Activated CD4-positive, alpha-beta T cell treated with anti-CD3 and anti-CD28 coated beads for 36 hours (primary cell): ENCODE measurements at regions of chr2 and their contacts with region 1.

Region 1: GRCh38 chr2:157404363-157404762 is 39.5 kb downstream of the CYTIP start:
- DNase-seq: peak; percentile 72
- ATAC-seq: peak; percentile 95
- H3K4me3 Mint-ChIP-seq: peak overlapping the region; percentile 0
- H3K27ac Mint-ChIP-seq: peak overlapping the region; percentile 80
- H3K4me1 Mint-ChIP-seq: peaks cover 75% of the 10 kb centered on the region
- H3K27me3 Mint-ChIP-seq: no peaks in the 10 kb centered on the region

Region 2: GRCh38 chr2:157170299-157170698 is 234.1 kb before region 1 on chr2:
- CTCF ChIA-PET with region 1: no interaction called
- POLR2A ChIA-PET with region 1: no interaction called
- intact Hi-C with region 1: no loop called
- DNase-seq: no peak
- ATAC-seq: no peak
- H3K4me3 Mint-ChIP-seq: no peak overlapping the region
- H3K27ac Mint-ChIP-seq: no peak overlapping the region
- H3K4me1 Mint-ChIP-seq: no peaks in the 10 kb centered on the region
- H3K27me3 Mint-ChIP-seq: peaks cover 8% of the 10 kb centered on the region

Region 3: DNA sequence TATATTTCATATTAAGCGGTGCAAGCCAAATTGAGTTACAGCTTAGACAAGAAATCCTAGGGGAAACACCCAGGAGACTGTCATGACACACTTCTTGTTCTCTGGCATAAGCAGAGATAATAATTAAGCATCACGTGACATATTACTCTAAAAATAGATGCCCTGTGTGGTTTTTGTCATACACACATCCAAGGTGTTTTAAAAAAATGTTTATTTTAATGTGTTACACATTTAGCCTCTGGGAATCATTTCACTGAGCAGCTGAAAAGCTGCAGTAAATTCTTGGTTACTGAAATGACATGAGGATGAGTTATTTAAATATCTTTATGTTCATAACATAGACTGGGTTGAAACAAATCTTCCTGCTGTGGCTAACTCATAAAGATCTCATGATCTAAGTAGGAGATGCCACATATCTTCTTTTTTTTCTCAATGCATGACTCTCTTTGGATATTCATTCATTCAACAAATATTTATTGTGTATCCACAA is 40.7 kb before region 1 on chr2:
- CTCF ChIA-PET with region 1: interaction called, 7 read pairs
- POLR2A ChIA-PET with region 1: no interaction called
- intact Hi-C with region 1: loop called in 1 of 2 experiments (anchors 2 kb)
- DNase-seq: no peak
- ATAC-seq: peak; percentile 77
- H3K4me3 Mint-ChIP-seq: no peak overlapping the region
- H3K27ac Mint-ChIP-seq: peak overlapping the region; percentile 5
- H3K4me1 Mint-ChIP-seq: peaks cover 32% of the 10 kb centered on the region
- H3K27me3 Mint-ChIP-seq: no peaks in the 10 kb centered on the region

Region 4: DNA sequence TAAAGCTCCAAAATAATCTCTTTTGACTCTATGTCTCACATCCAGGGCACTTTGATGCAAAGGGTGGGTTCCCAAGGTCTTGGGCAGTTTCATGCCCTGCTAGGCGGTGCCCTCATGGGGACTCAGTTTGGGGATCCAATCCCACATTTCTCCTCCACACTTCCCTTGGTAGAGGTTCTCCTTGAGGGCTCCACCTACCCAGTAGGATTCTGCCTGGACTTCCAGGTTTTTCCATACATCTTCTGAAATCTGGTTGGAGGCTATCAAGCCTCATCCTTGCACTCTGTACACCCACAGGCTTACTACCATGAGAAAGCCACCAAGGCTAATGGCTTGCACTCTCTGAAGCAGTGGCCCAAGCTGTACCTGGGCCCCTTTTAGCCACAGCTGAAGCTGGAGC is 29.0 kb before region 1 on chr2:
- CTCF ChIA-PET with region 1: no interaction called
- POLR2A ChIA-PET with region 1: no interaction called
- intact Hi-C with region 1: no loop called
- DNase-seq: no peak
- ATAC-seq: no peak
- H3K4me3 Mint-ChIP-seq: no peak overlapping the region
- H3K27ac Mint-ChIP-seq: no peak overlapping the region
- H3K4me1 Mint-ChIP-seq: peaks cover 20% of the 10 kb centered on the region
- H3K27me3 Mint-ChIP-seq: no peaks in the 10 kb centered on the region

Region 5: DNA sequence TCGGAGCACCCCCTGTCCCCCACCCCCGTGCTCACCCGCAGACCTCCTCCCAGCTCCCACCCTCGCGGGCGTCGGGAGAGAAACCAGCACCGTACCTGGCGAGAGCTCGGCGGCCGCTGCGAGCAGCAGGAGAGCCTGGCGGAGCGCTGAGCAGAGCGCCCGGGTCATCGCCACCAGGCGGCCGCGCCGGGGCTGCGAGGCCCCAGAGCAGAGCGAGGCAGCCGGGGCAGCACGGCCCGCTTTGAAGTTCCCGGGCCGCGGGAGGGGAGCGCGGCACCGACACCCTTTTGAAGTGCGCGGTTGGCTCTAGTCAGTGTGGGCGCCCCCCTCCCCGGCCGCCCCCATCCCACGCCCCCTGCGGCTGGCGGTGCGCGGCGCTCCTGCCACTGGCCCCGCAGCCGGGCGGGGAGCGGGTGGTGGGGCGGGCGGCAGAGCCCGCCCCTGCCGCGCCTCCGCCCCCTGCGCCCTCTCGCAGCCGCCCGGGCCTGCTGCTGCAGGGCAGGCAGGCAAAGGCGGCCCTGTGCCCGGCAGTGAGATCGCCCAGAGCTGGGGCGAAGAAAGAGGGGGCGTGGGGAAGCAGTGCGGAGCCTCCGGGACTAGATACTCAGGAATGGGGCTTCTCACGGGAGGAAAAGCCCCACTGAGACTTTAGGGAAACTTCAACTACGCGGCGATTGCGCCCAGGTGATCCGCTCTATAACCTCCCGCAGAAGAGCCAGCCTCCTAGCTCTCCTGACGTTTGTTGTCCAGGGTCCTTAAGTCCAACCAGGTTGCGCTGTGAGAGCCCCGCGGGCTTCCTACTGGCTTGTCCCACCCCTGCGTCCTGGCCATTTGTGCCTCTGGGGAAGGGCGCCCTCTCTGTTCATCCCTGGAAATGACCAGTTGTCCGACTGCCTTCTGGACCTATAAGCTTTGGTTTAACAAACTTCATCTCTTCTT is 224.4 kb after region 1 on chr2 and contains the start of gene ACVR1C:
- CTCF ChIA-PET with region 1: no interaction called
- POLR2A ChIA-PET with region 1: no interaction called
- intact Hi-C with region 1: no loop called
- DNase-seq: peak; percentile 80
- ATAC-seq: peak; percentile 82
- H3K4me3 Mint-ChIP-seq: peak within 1 kb of the TSS; percentile 76
- H3K27ac Mint-ChIP-seq: peak within 1 kb of the TSS; percentile 23
- H3K4me1 Mint-ChIP-seq: peaks cover 34% of the 10 kb centered on the region
- H3K27me3 Mint-ChIP-seq: peaks cover 5% of the 10 kb centered on the region
- total RNA-seq, gene ACVR1C: 1.6 to 1.7 TPM